ENCODE measurements at regions of chr17 and their contacts with region 1.

Region 1: DNA sequence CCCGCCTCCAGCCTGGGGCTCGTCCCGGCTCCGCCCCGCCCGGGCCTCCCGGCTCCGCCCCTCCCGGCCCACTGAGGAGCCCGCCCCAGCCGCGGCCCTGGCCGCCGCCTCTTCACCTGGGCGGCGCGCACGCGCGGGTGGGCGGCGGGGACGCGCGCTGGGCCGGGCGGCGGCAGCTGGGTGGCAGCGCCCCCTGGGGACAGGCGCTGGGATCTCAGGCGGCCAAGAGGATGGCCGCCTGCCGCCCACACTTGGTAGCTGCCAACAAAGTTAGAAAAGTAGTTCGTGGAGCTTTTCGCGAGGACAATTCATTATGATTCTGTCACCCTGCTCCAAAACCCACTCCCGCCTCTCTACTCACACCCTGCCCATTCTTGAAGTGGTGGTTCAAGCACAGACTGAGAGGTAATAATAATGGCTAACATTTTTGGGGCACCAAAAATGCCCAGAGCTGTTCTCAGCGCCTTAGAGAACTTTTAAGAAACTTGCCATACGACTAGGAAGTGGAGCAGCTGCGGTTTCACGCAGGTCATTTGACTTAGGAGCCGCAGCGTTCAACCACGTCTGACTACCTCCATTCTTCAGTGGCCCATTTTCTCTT is 340 bp upstream of the MYO1D start:
- DNase-seq: peak; percentile 89
- H3K4me3 ChIP-seq: peak overlapping the region; percentile 58 to 81 (median 72)
- H3K27ac ChIP-seq: peak overlapping the region; percentile 77
- H3K4me1 ChIP-seq: peaks cover 22% of the 10 kb centered on the region
- H3K27me3 ChIP-seq: peaks cover 0 to 3% of the 10 kb centered on the region in 2 experiments
- CTCF ChIP-seq: peak; percentile 93 to 96
- POLR2A ChIP-seq: no peak

Region 2: DNA sequence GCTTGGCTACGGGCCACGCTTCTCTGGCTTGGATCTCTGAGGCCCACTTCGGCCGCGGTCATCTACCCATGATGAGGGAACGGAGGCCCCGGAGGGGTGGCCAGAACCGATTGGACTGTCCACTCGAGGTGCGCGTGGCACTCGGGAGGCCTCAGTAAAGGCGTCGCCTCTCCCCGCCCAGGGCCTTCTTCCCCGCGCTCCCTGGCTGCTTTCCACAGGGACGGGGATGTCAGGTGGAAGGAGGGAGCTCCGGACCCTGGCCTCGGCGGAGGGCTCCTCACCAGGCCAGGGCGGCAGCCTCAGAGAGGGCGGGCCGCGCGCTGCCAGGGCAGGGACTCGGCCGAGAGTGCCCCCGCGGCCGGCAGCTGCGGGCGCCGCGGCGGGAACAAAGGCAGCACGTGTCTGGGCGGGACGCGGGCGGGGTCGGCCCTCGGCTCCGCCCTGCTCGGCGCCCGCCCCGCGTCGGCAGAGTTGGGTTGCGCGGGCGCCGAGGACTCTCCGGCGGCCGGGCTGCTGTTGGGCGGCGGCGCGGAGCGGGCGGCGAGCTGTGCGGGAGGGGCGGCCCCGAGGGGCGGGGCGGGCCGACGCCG is 391.1 kb before region 1 on chr17:
- CTCF ChIA-PET with region 1: interaction called, 18 read pairs
- POLR2A ChIA-PET with region 1: no interaction called
- dilution Hi-C with region 1: no loop called
- intact Hi-C with region 1: loop called (anchors 1 kb)
- DNase-seq: peak; percentile 70
- H3K4me3 ChIP-seq: peak overlapping the region in 1 of 3 experiments; percentile 47
- H3K27ac ChIP-seq: peak overlapping the region; percentile 50
- H3K4me1 ChIP-seq: peaks cover 6% of the 10 kb centered on the region
- H3K27me3 ChIP-seq: no peaks in the 10 kb centered on the region
- CTCF ChIP-seq: no peak
- POLR2A ChIP-seq: no peak

Region 3: GRCh38 chr17:32569171-32570080 is 307.8 kb before region 1 on chr17:
- CTCF ChIA-PET with region 1: no interaction called
- POLR2A ChIA-PET with region 1: no interaction called
- dilution Hi-C with region 1: no loop called
- intact Hi-C with region 1: no loop called
- DNase-seq: peak; percentile 5
- H3K4me3 ChIP-seq: no peak overlapping the region
- H3K27ac ChIP-seq: no peak overlapping the region
- H3K4me1 ChIP-seq: no peaks in the 10 kb centered on the region
- H3K27me3 ChIP-seq: no peaks in the 10 kb centered on the region
- CTCF ChIP-seq: no peak
- POLR2A ChIP-seq: no peak

Region 4: GRCh38 chr17:32769839-32770238 is 107.4 kb before region 1 on chr17:
- CTCF ChIA-PET with region 1: interaction called, 22 read pairs
- POLR2A ChIA-PET with region 1: no interaction called
- dilution Hi-C with region 1: no loop called
- intact Hi-C with region 1: no loop called
- DNase-seq: no peak
- H3K4me3 ChIP-seq: no peak overlapping the region
- H3K27ac ChIP-seq: no peak overlapping the region
- H3K4me1 ChIP-seq: peaks cover 24% of the 10 kb centered on the region
- H3K27me3 ChIP-seq: no peaks in the 10 kb centered on the region
- CTCF ChIP-seq: no peak
- POLR2A ChIP-seq: no peak

Region 5: DNA sequence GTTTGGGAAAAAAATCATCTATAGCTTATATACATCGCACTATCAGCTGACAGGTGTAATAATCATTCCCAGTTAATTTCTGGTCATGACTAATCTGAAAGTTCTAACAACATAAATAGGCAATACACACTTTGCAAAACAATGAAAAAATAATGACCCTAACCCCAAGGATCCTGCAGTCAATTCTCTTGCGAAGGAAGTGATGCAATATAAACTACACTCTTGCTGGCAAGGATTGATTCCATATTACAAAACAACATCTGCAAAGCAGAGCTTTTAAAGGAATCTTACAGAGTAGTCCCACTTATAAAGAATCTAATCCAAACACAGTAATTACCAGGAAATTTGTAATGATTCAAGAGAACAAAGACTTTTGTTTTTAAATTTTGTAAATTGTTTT is 73.7 kb before region 1 on chr17:
- CTCF ChIA-PET with region 1: interaction called, 45 read pairs
- POLR2A ChIA-PET with region 1: interaction called, 6 read pairs
- dilution Hi-C with region 1: no loop called
- intact Hi-C with region 1: loop called (anchors 1 kb)
- DNase-seq: peak; percentile 89
- H3K4me3 ChIP-seq: no peak overlapping the region
- H3K27ac ChIP-seq: peak overlapping the region; percentile 63
- H3K4me1 ChIP-seq: peaks cover 84% of the 10 kb centered on the region
- H3K27me3 ChIP-seq: no peaks in the 10 kb centered on the region
- CTCF ChIP-seq: no peak
- POLR2A ChIP-seq: no peak

Region 6: GRCh38 chr17:32859857-32860525 is 17.3 kb before region 1 on chr17:
- CTCF ChIA-PET with region 1: interaction called, 28 read pairs
- POLR2A ChIA-PET with region 1: no interaction called
- dilution Hi-C with region 1: no loop called
- intact Hi-C with region 1: no loop called
- DNase-seq: no peak
- H3K4me3 ChIP-seq: no peak overlapping the region
- H3K27ac ChIP-seq: no peak overlapping the region
- H3K4me1 ChIP-seq: peaks cover 9% of the 10 kb centered on the region
- H3K27me3 ChIP-seq: no peaks in the 10 kb centered on the region
- CTCF ChIP-seq: no peak
- POLR2A ChIP-seq: no peak

Region 7: DNA sequence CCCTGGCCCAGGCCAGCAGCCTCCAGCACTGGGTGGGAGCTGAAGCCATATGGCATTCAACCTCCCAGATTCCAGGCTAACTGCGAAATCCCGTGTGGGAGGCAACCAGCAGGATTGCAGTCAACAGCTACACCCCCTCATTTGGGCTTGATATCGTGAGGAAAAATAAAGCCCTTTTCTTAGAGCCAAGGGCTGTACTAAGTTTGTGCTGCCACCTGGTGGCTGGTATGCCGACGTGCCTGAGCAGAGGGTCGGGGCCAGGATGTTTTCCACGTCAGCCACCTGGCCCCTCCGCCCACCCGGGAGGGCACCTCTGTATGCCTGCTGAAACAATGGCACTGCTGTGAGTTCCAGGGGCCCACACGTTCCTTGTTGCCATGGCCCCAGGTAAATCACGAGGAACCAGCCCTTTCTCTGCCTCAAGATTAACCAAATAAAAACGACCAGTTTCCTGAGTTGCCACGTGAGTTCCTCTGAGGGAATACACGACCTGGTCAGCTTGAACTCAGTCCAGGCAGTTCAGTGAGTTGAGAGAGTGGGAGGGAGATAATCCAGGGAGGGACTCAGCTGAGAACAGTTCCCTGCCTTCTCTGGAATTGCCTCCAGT is 59.7 kb after region 1 on chr17:
- CTCF ChIA-PET with region 1: interaction called, 59 read pairs
- POLR2A ChIA-PET with region 1: no interaction called
- dilution Hi-C with region 1: no loop called
- intact Hi-C with region 1: loop called (anchors 1 kb)
- DNase-seq: peak; percentile 90
- H3K4me3 ChIP-seq: no peak overlapping the region
- H3K27ac ChIP-seq: peak overlapping the region; percentile 61
- H3K4me1 ChIP-seq: peaks cover 10% of the 10 kb centered on the region
- H3K27me3 ChIP-seq: no peaks in the 10 kb centered on the region
- CTCF ChIP-seq: peak; percentile 88 to 89
- POLR2A ChIP-seq: no peak

Region 8: DNA sequence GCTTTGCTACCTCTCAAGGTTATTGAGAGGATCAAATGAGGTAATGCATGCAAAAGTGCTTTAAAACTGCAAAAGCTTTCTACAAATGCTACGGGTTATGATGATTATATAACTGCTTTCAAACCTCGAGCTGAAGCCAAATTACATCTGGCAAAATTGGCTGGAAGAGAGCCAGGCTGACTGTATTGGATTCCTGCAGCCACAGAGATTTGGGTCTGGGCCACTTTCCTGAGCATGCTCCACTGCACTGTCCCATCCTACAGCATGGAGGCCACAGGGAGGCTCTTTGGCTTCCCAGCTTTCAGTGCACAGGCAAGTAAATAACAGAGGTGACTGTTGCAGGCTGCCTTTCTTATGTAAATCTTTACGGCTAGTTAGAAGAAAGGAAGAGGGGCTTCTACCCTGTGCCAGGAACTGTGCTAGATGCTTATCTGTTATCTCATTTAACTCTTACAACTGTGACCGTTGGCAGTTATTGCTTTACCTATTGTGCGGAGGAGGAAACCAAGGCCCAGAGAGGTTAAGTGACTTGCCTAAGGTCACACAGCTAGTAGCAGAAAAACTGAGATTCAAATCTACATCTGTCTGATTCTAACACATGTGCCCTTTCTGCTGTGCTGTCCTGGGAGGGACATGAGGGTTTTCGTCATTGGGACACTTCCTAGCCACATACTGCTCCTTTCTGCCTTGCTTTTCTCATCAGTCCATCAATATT is 236.2 kb after region 1 on chr17:
- CTCF ChIA-PET with region 1: no interaction called
- POLR2A ChIA-PET with region 1: no interaction called
- dilution Hi-C with region 1: no loop called
- intact Hi-C with region 1: no loop called
- DNase-seq: no peak
- H3K4me3 ChIP-seq: no peak overlapping the region
- H3K27ac ChIP-seq: no peak overlapping the region
- H3K4me1 ChIP-seq: no peaks in the 10 kb centered on the region
- H3K27me3 ChIP-seq: no peaks in the 10 kb centered on the region
- CTCF ChIP-seq: no peak
- POLR2A ChIP-seq: no peak

Measured in endothelial cell of umbilical vein (primary cell).